BJ (cell line): ENCODE measurements at regions of chr5 and their contacts with region 1.

Region 1: DNA sequence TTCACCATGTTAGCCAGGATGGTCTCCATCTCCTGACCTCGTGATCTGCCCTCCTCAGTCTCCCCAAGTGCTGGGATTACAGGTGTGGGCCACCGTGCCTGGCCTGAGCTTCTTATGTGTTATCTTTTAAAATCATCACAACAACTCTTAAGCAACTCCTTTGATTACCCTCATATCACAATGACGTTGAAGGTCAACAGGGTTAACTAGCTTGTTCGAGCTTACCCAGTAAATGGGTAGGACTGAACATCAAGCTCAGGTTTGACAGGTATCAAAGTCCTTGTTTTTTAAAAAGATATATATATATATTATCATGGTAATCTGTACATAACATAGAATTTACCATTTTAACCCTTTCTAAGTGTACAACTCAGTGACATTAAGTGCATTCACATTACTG is 3.1 kb downstream of the GRXCR2 start:
- DNase-seq: no peak
- H3K4me3 ChIP-seq: no peak overlapping the region
- H3K27me3 ChIP-seq: 0 out of 2 replicates have a peak, but pooled peaks cover 1% of the 10 kb centered on the region
- CTCF ChIP-seq: no peak

Region 2: GRCh38 chr5:145887976-145888574 is 18.3 kb after region 1 on chr5:
- CTCF ChIA-PET with region 1: interaction called, 11 read pairs
- POLR2A ChIA-PET with region 1: no interaction called
- DNase-seq: no peak
- H3K4me3 ChIP-seq: no peak overlapping the region
- H3K27me3 ChIP-seq: no peaks in the 10 kb centered on the region
- CTCF ChIP-seq: peak; percentile 89